Naive thymus-derived CD4-positive, alpha-beta T cell (primary cell): ENCODE measurements at regions of chr22 and their contacts with region 1.

Region 1: DNA sequence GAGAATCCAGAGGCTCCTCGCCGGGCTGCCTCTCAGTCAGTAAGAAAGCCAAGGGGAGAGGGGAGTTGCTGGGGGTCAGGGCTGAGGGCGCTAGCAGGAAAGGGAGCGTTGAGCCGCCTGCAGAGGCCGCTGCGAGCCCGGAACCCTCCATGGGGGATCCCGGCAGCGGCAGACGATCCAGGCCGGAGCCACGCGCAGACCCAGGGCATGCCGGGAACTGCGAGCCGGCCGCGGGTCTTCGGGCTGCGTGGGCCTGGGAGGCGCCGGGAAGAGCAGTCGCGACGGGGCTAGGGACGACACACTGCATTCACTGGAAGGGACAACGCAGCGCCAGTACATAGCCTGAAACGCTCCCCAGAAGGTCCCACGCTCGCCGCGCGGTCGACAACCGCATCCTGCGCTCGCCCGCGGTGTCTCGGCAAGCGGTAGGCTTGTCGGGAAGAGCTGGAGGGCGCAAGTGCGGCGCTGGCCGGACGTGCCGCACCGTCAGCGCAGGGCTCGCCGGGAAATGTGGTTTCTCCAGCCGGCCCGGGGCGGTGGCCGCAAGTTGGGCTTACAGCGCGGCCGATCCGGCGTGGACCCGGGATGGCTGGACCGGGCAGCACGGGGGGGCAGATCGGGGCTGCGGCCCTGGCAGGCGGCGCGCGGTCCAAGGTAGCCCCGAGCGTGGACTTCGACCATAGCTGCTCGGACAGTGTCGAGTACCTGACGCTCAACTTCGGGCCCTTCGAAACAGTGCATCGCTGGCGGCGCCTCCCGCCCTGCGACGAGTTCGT is at the start of gene LZTR1:
- DNase-seq: peak; percentile 47 to 80 (median 63)
- ATAC-seq: peak; percentile 86
- H3K4me3 ChIP-seq: peak within 1 kb of the TSS; percentile 80
- H3K4me3 Mint-ChIP-seq: peak within 1 kb of the TSS; percentile 89 to 97 (median 93)
- H3K27ac ChIP-seq: peak within 1 kb of the TSS; percentile 84
- H3K27ac Mint-ChIP-seq: peak within 1 kb of the TSS; percentile 86 to 97 (median 92)
- H3K4me1 ChIP-seq: peaks cover 15 to 32% of the 10 kb centered on the region in 2 donors
- H3K4me1 Mint-ChIP-seq: peaks cover 33 to 50% (median 43%) of the 10 kb centered on the region in 7 donors
- H3K27me3 ChIP-seq: no peaks in the 10 kb centered on the region
- H3K27me3 Mint-ChIP-seq: no peaks in the 10 kb centered on the region
- total RNA-seq, gene LZTR1: 61.8 to 104 (median 74.2) TPM

Region 2: DNA sequence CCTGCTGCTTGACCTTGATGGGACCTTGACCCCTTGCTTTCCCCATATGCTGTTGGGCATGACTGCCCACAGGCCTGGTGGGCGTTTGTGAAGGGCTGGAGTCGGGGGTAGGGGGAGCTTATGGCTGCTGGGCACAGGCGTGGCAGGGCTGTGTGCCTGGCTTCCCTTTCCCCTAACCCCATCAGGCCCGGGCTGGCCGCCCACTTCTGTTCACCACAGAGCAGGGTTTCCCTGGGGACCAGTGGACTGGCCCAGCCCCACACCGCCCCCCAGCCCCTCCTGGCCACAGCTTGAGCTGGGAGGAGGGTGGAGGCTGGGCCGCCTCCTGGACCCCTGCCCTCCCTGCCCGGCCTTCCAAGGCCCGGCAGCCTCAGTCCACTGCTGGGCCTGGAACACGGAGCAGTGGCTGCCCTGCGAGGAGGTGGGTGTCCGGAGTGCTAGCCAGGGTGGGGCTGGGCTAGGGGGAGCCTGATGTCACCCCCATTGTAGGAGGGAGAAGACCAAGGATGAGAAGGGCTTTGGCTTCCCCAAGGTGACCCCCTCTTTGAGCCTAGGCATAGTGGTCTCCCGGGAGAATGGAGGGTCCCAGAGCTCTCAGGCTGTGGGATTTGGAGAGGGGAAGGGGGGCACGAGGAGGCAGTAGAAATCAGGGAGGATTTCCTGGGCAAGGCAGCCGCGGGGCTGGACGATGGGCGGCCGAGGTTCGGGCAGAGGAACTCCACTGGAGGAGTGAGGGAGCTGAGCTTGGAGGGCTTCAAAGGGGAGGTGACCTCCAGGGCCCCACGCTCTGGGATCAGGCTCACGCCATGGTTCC is 14.9 kb before region 1 on chr22 and contains the start of gene AIFM3:
- CTCF ChIA-PET with region 1: no interaction called
- POLR2A ChIA-PET with region 1: no interaction called
- intact Hi-C with region 1: no loop called
- DNase-seq: no peak
- ATAC-seq: no peak
- H3K4me3 ChIP-seq: no peak within 1 kb of the TSS
- H3K4me3 Mint-ChIP-seq: peak within 1 kb of the TSS in 4 of 10 donors; percentile 20 to 71 (median 38)
- H3K27ac ChIP-seq: no peak within 1 kb of the TSS
- H3K27ac Mint-ChIP-seq: no peak within 1 kb of the TSS
- H3K4me1 ChIP-seq: no peaks in the 10 kb centered on the region
- H3K4me1 Mint-ChIP-seq: peaks cover 0 to 13% (median 10%) of the 10 kb centered on the region in 7 donors
- H3K27me3 ChIP-seq: no peaks in the 10 kb centered on the region
- H3K27me3 Mint-ChIP-seq: peaks cover 0 to 30% (median 6%) of the 10 kb centered on the region in 5 donors
- total RNA-seq, gene AIFM3: 0.24 to 9.0 (median 1.2) TPM

Region 3: DNA sequence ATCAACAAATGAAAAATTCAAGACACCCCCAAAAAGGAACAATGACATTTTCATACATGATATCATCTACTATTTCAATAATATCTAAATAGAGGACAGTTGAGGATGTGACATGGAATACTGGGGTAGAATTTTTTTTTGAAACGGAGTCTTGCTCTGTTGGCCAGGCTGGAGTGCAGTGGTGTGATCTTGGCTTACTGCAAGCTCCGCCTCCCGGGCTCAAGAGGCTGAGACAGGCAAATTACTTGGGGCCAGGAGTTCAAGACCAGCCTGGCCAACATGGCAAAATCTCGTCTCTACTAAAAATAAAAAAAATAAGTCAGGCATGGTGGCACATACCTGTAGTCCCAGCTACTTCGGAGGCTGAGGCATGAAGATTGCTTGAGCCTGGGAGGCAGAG is 105.1 kb after region 1 on chr22:
- CTCF ChIA-PET with region 1: no interaction called
- POLR2A ChIA-PET with region 1: no interaction called
- intact Hi-C with region 1: no loop called
- DNase-seq: no peak
- ATAC-seq: no peak
- H3K4me3 ChIP-seq: no peak overlapping the region
- H3K4me3 Mint-ChIP-seq: no peak overlapping the region
- H3K27ac ChIP-seq: no peak overlapping the region
- H3K27ac Mint-ChIP-seq: no peak overlapping the region
- H3K4me1 ChIP-seq: no peaks in the 10 kb centered on the region
- H3K4me1 Mint-ChIP-seq: no peaks in the 10 kb centered on the region
- H3K27me3 ChIP-seq: no peaks in the 10 kb centered on the region
- H3K27me3 Mint-ChIP-seq: peaks cover 0 to 7% (median 4%) of the 10 kb centered on the region in 5 donors

Region 4: GRCh38 chr22:21849489-21849888 is 867.5 kb after region 1 on chr22:
- CTCF ChIA-PET with region 1: no interaction called
- POLR2A ChIA-PET with region 1: no interaction called
- intact Hi-C with region 1: loop called in 1 of 2 experiments (anchors 10 kb)
- DNase-seq: no peak
- ATAC-seq: no peak
- H3K4me3 ChIP-seq: no peak overlapping the region
- H3K4me3 Mint-ChIP-seq: peak overlapping the region in 3 of 10 donors; percentile 0 to 23 (median 7)
- H3K27ac ChIP-seq: no peak overlapping the region
- H3K27ac Mint-ChIP-seq: peak overlapping the region in 2 of 9 donors; percentile 14 to 21
- H3K4me1 ChIP-seq: peaks cover 5 to 27% of the 10 kb centered on the region in 2 donors
- H3K4me1 Mint-ChIP-seq: peaks cover 31 to 86% (median 68%) of the 10 kb centered on the region in 7 donors
- H3K27me3 ChIP-seq: no peaks in the 10 kb centered on the region
- H3K27me3 Mint-ChIP-seq: no peaks in the 10 kb centered on the region